Activated naive CD4-positive, alpha-beta T cell treated with anti-CD3 and anti-CD28 coated beads for 36 hours (primary cell): ENCODE measurements at regions of chr18 and their contacts with region 1.

Region 1: GRCh38 chr18:2571200-2572143 is at the starts of genes METTL4 and NDC80:
- DNase-seq: peak; percentile 90
- H3K4me3 Mint-ChIP-seq: peak within 1 kb of the TSS; percentile 97
- H3K27ac Mint-ChIP-seq: peak within 1 kb of the TSS; percentile 98
- H3K4me1 Mint-ChIP-seq: peaks cover 49% of the 10 kb centered on the region
- H3K27me3 Mint-ChIP-seq: no peaks in the 10 kb centered on the region
- total RNA-seq, gene METTL4: 19.4 to 20.6 TPM
- total RNA-seq, gene NDC80: 96.8 to 108 TPM

Region 2: GRCh38 chr18:812376-813171 is 1758.9 kb before region 1 on chr18:
- CTCF ChIA-PET with region 1: no interaction called
- intact Hi-C with region 1: loop called (anchors 10 kb)
- DNase-seq: peak; percentile 82
- H3K4me3 Mint-ChIP-seq: peak overlapping the region; percentile 95
- H3K27ac Mint-ChIP-seq: peak overlapping the region; percentile 99
- H3K4me1 Mint-ChIP-seq: peaks cover 54% of the 10 kb centered on the region
- H3K27me3 Mint-ChIP-seq: no peaks in the 10 kb centered on the region

Region 3: DNA sequence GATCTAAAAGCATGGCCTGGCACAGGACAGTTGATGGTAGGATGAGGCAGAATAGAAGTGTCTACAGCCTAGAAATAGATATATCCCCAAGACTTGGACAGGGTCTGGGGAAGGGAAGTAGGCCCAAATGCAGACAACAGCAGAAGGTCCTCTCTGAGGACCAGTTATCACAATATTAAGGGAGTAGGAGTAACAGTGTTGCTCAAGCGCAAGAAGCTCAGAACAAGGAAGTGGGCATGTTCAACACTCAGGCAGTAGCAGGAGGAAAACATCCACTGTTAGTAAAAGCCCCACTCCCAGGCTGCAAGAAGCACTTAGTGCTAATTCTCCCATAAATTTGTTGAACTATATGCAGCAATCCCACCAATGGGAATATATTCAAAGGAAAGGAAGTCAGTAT is 314.9 kb before region 1 on chr18:
- CTCF ChIA-PET with region 1: no interaction called
- intact Hi-C with region 1: no loop called
- DNase-seq: no peak
- H3K4me3 Mint-ChIP-seq: no peak overlapping the region
- H3K27ac Mint-ChIP-seq: no peak overlapping the region
- H3K4me1 Mint-ChIP-seq: no peaks in the 10 kb centered on the region
- H3K27me3 Mint-ChIP-seq: no peaks in the 10 kb centered on the region

Region 4: DNA sequence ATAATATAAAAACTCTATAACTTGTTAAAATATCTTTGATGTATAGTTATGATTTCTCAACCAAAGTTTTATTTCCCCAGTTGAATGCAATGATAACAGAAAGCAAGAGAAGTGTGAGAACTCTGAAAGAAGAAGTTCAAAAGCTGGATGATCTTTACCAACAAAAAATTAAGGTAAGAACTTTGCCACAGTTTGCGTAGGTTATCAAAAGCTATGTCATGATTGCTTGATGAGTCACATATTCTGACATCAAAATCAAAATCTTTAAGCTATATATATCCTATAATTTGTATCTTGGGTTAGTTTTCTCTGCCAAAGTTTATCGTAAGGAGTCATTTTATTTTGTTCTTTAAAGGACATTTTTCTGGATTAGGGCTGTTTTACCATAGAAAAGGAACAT is 34.9 kb after region 1 on chr18:
- CTCF ChIA-PET with region 1: interaction called, 3 read pairs
- intact Hi-C with region 1: loop called (anchors 2 kb)
- DNase-seq: no peak
- H3K4me3 Mint-ChIP-seq: no peak overlapping the region
- H3K27ac Mint-ChIP-seq: peak overlapping the region; percentile 79
- H3K4me1 Mint-ChIP-seq: peaks cover 49% of the 10 kb centered on the region
- H3K27me3 Mint-ChIP-seq: no peaks in the 10 kb centered on the region

Region 5: DNA sequence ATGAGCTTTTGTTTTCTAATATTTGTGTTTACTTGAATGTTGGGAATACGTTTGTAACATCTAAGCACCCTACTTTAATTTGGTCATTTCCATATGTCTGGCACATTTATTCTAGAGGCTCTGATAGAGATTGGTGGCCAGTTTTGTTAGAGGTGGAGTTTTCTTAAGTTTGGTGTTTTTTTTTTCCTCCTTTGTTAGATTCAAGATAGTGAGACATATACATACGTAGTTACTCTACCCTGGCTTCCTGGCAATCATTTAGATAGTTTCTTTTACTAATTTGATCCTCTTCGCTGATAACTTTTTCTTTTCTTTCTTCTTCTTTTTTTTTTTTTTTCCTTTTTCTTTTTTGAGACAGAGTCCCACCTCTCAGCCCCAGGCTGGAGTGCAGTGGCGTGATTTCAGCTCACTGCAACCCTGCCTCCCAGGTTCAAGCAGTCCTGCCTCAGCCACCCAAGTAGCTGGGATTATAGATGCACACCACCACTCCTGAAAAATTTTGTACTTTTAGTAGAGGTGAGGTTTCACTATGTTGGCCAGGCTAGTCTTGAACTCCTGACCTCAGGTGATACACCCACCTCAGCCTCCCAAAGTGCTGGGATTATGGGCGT is 110.6 kb after region 1 on chr18:
- CTCF ChIA-PET with region 1: no interaction called
- intact Hi-C with region 1: loop called (anchors 2 kb)
- DNase-seq: no peak
- H3K4me3 Mint-ChIP-seq: no peak overlapping the region
- H3K27ac Mint-ChIP-seq: peak overlapping the region; percentile 86
- H3K4me1 Mint-ChIP-seq: peaks cover 55% of the 10 kb centered on the region
- H3K27me3 Mint-ChIP-seq: no peaks in the 10 kb centered on the region

Region 6: GRCh38 chr18:2776601-2777000 is 205.1 kb after region 1 on chr18:
- CTCF ChIA-PET with region 1: no interaction called
- intact Hi-C with region 1: no loop called
- DNase-seq: no peak
- H3K4me3 Mint-ChIP-seq: no peak overlapping the region
- H3K27ac Mint-ChIP-seq: no peak overlapping the region
- H3K4me1 Mint-ChIP-seq: no peaks in the 10 kb centered on the region
- H3K27me3 Mint-ChIP-seq: no peaks in the 10 kb centered on the region

Region 7: DNA sequence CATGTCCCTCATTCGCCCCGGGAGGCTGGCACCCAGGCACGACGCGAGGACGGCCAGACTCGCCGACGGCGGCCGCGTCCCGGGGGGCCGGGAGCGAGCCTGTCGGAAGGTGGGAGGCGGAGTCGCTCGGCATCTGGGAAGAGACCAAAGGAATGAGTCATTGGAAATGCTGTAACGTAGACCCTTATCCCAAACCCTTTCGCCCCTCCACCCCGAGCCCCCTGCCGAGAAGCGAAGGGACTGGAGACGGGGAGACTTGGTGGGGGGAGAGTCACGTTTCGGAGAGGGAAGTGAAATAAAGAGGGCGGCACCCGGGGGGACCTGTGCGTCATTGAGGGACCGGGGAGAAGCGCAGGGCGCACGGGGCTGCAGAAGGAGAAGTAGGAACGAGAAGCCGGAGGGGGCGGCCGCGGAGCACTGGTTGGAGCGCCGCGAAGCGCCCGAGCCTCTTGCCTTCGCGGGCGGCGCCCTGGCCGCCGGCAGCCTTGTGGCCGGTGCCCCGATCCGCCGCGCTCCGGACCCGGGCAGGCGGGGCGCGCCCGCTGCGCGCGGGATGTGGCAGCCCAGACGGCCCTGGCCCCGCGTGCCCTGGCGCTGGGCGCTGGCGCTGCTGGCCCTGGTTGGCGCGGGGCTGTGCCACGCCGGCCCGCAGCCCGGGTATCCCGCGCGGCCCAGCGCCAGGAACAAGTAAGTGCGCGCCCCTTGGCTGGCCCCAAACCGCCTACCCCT is 275.3 kb after region 1 on chr18 and contains the start of gene EMILIN2:
- CTCF ChIA-PET with region 1: no interaction called
- intact Hi-C with region 1: loop called (anchors 5 kb)
- DNase-seq: peak; percentile 64
- H3K4me3 Mint-ChIP-seq: peak within 1 kb of the TSS; percentile 83
- H3K27ac Mint-ChIP-seq: peak within 1 kb of the TSS; percentile 61
- H3K4me1 Mint-ChIP-seq: peaks cover 18% of the 10 kb centered on the region
- H3K27me3 Mint-ChIP-seq: peaks cover 31% of the 10 kb centered on the region
- total RNA-seq, gene EMILIN2: 12.2 to 13.2 TPM

Region 8: GRCh38 chr18:2978646-2979045 is 407.2 kb after region 1 on chr18:
- CTCF ChIA-PET with region 1: no interaction called
- intact Hi-C with region 1: loop called (anchors 5 kb)
- DNase-seq: peak; percentile 66
- H3K4me3 Mint-ChIP-seq: peak overlapping the region; percentile 54
- H3K27ac Mint-ChIP-seq: peak overlapping the region; percentile 92
- H3K4me1 Mint-ChIP-seq: peaks cover 91% of the 10 kb centered on the region
- H3K27me3 Mint-ChIP-seq: no peaks in the 10 kb centered on the region

Region 9: GRCh38 chr18:3151399-3152264 is 580.2 kb after region 1 on chr18:
- CTCF ChIA-PET with region 1: no interaction called
- intact Hi-C with region 1: loop called (anchors 10 kb)
- DNase-seq: no peak
- H3K4me3 Mint-ChIP-seq: no peak overlapping the region
- H3K27ac Mint-ChIP-seq: no peak overlapping the region
- H3K4me1 Mint-ChIP-seq: peaks cover 6% of the 10 kb centered on the region
- H3K27me3 Mint-ChIP-seq: no peaks in the 10 kb centered on the region